Mammary epithelial cell (primary cell): ENCODE measurements at regions of chr18 and their contacts with region 1.

Region 1: DNA sequence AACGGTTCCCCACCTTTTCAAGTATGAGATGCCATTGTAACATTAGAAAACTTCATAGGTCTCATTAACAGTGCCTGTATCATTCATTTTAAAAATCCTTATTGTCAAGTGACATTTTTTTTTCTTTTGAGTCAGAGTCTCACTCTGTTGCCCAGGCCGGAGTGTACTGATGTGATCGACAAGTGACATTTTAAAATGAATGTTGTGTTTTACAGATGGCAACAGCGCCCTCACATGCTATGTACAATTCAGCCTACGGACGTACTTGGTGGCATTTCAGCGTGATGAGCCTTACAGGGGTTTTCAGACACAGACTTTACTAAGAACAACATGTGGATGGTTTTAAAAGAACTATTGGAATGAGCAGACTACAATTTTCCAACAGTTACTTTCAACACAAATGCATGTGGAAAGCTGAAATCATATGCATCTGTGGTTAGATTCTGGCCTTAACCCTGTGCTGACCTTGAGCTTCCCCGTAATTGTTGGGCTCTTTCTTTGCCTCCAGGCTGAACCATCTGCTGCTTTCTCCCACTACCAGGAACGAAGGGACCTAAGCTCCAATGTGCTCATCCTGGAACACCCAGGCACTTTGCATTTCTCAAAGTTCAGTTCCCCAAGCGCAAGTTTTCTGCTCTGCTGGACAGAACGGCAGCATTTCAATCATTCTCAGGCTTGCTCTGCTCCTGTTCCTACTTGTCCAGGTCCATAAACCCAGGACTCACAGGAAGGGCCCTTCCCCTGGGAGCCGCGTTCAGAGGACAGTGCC is 119.9 kb upstream of the NDUFV2 start:
- DNase-seq: peak; percentile 54
- H3K4me3 ChIP-seq: no peak overlapping the region
- H3K27ac ChIP-seq: peak overlapping the region; percentile 72
- H3K4me1 ChIP-seq: peaks cover 40% of the 10 kb centered on the region
- H3K27me3 ChIP-seq: no peaks in the 10 kb centered on the region
- CTCF ChIP-seq: peak; percentile 35 to 64

Region 2: GRCh38 chr18:7535386-7535785 is 1447.2 kb before region 1 on chr18:
- CTCF ChIA-PET with region 1: no interaction called
- dilution Hi-C with region 1: no loop called
- in situ Hi-C with region 1: no loop called
- intact Hi-C with region 1: no loop called
- DNase-seq: peak; percentile 34
- H3K4me3 ChIP-seq: no peak overlapping the region
- H3K27ac ChIP-seq: no peak overlapping the region
- H3K4me1 ChIP-seq: no peaks in the 10 kb centered on the region
- H3K27me3 ChIP-seq: no peaks in the 10 kb centered on the region
- CTCF ChIP-seq: no peak

Region 3: DNA sequence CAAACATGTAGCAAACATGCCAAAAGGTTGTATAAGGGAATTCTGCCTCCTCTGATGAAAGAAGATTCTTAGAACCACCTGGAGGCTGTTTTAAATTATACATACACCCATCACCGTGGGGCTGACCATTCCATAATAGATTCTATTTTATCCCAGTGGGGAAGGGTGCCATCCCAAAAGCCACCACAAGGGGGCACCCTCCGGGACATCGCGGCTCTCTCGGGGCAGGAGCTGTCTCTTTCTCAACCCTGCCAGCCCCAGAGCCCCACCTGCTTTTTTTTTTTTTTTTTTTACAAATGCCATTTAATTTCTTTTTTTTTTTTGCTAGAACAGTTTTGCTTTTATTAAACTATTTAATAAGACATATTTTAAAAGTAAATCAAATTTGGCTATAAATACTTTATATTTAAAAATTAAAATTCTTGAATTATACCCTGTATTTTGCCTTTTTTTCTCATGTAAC is 285.8 kb before region 1 on chr18:
- CTCF ChIA-PET with region 1: interaction called, 7 read pairs
- dilution Hi-C with region 1: loop called (anchors 25 kb)
- in situ Hi-C with region 1: loop called in 1 of 2 experiments (anchors 10 kb)
- intact Hi-C with region 1: loop called (anchors 1 kb)
- DNase-seq: peak; percentile 48
- H3K4me3 ChIP-seq: no peak overlapping the region
- H3K27ac ChIP-seq: no peak overlapping the region
- H3K4me1 ChIP-seq: peaks cover 4% of the 10 kb centered on the region
- H3K27me3 ChIP-seq: no peaks in the 10 kb centered on the region
- CTCF ChIP-seq: peak; percentile 78 to 87

Region 4: GRCh38 chr18:8786478-8787370 is 195.9 kb before region 1 on chr18:
- CTCF ChIA-PET with region 1: no interaction called
- dilution Hi-C with region 1: no loop called
- in situ Hi-C with region 1: no loop called
- intact Hi-C with region 1: no loop called
- DNase-seq: peak; percentile 91
- H3K4me3 ChIP-seq: no peak overlapping the region
- H3K27ac ChIP-seq: peak overlapping the region; percentile 75
- H3K4me1 ChIP-seq: peaks cover 21% of the 10 kb centered on the region
- H3K27me3 ChIP-seq: no peaks in the 10 kb centered on the region
- CTCF ChIP-seq: no peak

Region 5: GRCh38 chr18:8800449-8800848 is 182.2 kb before region 1 on chr18:
- CTCF ChIA-PET with region 1: no interaction called
- dilution Hi-C with region 1: no loop called
- in situ Hi-C with region 1: no loop called
- intact Hi-C with region 1: loop called (anchors 2 kb)
- DNase-seq: peak; percentile 78
- H3K4me3 ChIP-seq: no peak overlapping the region
- H3K27ac ChIP-seq: peak overlapping the region; percentile 51
- H3K4me1 ChIP-seq: peaks cover 39% of the 10 kb centered on the region
- H3K27me3 ChIP-seq: no peaks in the 10 kb centered on the region
- CTCF ChIP-seq: no peak

Region 6: GRCh38 chr18:8930990-8931648 is 51.5 kb before region 1 on chr18:
- CTCF ChIA-PET with region 1: no interaction called
- dilution Hi-C with region 1: loop called (anchors 5 kb)
- in situ Hi-C with region 1: no loop called
- intact Hi-C with region 1: no loop called
- DNase-seq: no peak
- H3K4me3 ChIP-seq: no peak overlapping the region
- H3K27ac ChIP-seq: no peak overlapping the region
- H3K4me1 ChIP-seq: no peaks in the 10 kb centered on the region
- H3K27me3 ChIP-seq: no peaks in the 10 kb centered on the region
- CTCF ChIP-seq: no peak

Region 7: DNA sequence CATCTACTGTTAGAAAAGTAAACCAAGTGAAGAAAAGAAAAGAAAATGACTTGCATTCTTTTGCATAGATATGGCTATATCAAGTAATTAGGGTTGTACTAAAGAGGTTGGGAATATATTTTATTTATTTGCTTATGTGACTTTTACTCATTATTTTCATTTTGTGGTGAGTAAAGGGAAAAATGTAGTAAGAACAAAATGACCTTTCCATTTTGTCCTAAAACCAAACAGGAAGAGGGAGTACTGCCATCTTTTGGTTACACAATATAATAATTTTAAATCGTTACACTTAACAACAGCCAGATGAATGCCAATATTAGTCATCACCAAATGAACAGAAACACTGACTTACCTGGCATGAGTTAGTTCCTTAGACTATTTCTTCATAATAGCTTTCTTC is 72.6 kb after region 1 on chr18:
- CTCF ChIA-PET with region 1: interaction called, 11 read pairs
- dilution Hi-C with region 1: no loop called
- in situ Hi-C with region 1: no loop called
- intact Hi-C with region 1: loop called (anchors 2 kb)
- DNase-seq: peak; percentile 85
- H3K4me3 ChIP-seq: peak overlapping the region in 1 of 3 experiments; percentile 25
- H3K27ac ChIP-seq: peak overlapping the region; percentile 85
- H3K4me1 ChIP-seq: peaks cover 20% of the 10 kb centered on the region
- H3K27me3 ChIP-seq: no peaks in the 10 kb centered on the region
- CTCF ChIP-seq: peak; percentile 29 to 36